ENCODE measurements at regions of chr9 and their contacts with region 1.

Region 1: DNA sequence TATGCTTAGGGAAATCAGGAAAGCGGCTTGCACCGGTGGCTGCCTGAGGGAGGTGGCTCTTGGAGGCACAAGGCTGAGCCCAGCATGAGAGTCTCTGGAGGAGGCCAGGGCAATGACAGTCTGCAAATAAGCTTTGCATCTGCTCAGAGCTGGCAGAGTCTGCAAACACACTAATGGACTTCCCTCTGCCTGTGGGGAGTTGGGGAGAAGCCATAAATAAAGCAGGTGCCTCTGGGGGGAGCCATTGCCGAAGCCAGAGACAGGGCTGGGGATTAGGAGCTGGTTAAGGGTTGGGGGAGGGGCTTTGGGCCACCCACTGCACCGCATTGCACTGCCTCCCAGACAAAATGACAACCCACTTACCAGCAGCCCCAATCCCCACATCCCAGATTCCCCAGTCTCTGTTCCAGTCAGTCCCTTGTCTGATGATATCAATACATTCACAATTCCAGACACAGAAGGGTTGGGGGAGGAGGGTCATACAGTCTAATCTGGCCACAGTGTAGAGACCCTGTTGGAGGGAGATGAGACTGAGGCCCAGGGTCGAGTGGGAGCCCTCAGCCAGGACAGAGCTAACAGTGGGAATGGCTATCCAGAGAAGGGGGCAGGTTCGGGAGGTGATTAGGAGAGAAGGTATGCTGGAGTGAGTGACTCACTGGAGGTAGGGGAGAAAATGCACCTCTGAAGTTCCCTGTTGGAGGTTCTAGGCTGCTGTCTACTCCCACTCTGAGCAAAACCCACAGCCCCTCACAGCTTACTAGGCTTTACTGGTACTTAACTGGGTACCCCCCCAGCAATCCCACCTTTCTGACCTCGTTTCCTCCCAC is 53.7 kb downstream of the PAX5 start:
- DNase-seq: no peak
- ATAC-seq: no peak
- H3K4me3 ChIP-seq: no peak overlapping the region
- H3K27ac ChIP-seq: no peak overlapping the region
- H3K4me1 ChIP-seq: no peaks in the 10 kb centered on the region
- H3K27me3 ChIP-seq: peaks cover 0 to 97% (median 86%) of the 10 kb centered on the region in 7 donors
- CTCF ChIP-seq: no peak

Region 2: DNA sequence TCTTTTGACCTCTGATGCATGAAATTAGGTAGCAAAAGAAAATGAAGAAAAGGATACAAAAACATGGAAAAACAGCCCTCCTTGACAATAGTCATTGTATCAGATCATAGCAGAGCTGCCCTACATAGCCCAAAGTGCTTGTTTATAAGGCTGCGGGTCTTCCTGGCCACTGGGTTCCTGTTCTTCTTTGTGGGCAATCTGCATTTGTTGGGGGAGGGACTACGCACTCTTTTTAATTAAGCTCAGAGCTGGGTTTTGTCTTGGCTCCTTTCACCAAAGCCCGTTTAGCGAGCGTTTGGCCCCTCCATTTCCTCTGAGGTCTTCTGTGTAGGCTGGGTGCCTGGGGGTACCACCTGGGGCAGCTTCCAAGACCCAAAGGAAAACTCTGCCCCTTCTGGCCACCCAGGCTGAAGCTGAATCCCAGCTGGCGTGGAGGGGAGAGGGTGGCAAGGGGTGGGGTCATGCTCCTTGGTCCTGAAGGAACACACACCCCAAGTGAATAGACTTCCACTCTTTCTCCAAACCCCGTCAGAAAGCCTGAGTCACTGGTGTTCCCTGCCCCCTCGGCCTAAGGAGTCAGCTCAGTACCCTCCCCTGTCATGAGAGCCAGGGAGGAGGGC is 60.3 kb after region 1 on chr9:
- intact Hi-C with region 1: loop called in 1 of 10 experiments (anchors 10 kb)
- DNase-seq: no peak
- ATAC-seq: no peak
- H3K4me3 ChIP-seq: no peak overlapping the region
- H3K27ac ChIP-seq: no peak overlapping the region
- H3K4me1 ChIP-seq: peaks cover 10 to 27% (median 26%) of the 10 kb centered on the region in 9 donors
- H3K27me3 ChIP-seq: peaks cover 27 to 100% (median 98%) of the 10 kb centered on the region in 7 donors
- CTCF ChIP-seq: no peak